ENCODE measurements at regions of chr17 and their contacts with region 1.

Region 1: DNA sequence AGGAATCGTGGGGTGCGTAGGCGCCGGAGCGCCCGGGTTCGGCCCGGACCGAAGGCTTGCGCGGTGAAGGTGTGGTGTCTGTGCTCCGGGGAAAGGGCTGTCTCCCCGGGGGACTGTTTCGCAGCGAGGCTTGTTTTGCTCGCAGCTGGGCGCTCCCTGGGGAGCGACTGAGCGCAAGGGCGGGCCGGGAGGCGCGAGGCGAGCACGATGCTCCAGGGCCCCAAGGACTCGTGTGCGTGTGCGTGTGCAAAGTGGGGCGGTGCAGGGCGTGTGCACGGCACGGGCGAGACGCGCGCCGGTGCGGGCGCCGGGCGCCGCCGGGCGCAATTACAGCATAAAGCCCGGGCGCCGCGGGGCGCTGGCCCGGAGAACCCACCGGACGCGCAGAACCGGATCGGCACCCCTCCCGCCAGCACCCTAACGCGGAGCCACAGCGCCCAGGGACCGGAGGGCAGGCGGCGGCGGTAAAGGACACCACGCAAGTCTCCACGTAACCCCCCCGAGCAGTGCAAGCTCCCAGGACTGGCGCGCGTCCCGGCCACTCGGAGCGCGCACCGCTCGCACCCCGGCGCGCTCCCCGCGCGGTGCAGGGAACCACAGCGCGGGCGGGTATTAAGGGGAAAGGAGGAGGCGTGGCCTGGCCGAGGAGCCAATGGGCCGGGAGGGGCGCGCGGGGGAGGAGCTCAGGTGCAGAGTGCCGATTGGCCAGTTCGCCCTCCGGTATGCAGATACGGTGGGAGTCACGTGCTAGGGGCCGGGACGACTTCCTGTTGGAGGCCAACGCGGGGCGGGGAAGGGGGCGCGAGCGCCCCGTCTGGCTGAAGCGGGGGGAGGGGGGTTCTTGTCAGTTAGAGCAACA is at the start of gene TNRC6C:
- DNase-seq: peak; percentile 100
- H3K4me3 ChIP-seq: peak within 1 kb of the TSS; percentile 93
- H3K4me3 Mint-ChIP-seq: peak within 1 kb of the TSS; percentile 97
- H3K27ac Mint-ChIP-seq: peak within 1 kb of the TSS; percentile 85
- H3K4me1 ChIP-seq: peaks cover 3% of the 10 kb centered on the region
- H3K4me1 Mint-ChIP-seq: peaks cover 6% of the 10 kb centered on the region
- H3K27me3 ChIP-seq: no peaks in the 10 kb centered on the region
- H3K27me3 Mint-ChIP-seq: peaks cover 31% of the 10 kb centered on the region
- CTCF ChIP-seq: peak in 1 of 2 experiments; percentile 47
- total RNA-seq, gene TNRC6C: 17.9 and 19.5 TPM in 2 replicates

Region 2: DNA sequence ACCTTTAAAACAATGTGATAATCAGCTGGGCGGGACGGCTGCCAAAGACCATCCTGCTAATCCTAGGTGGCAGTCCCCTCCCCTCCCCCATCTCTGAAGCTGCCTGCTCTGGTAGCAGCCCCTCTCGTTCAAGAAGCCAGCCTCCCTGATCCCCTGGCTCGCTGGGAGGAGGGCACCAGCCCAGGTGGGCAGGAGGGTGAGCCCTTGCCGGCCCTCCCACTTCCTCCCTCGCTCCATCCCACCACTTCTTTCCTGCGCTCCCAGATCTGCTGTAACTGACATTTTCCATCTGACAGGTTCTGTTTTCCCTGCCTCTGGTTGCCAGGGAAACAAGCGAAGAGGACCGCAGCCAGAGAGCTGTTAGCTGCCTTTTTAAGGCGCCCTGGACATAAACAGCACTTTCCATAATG is 155.3 kb before region 1 on chr17:
- CTCF ChIA-PET with region 1: no interaction called
- POLR2A ChIA-PET with region 1: no interaction called
- intact Hi-C with region 1: no loop called
- DNase-seq: peak in 1 of 2 experiments; percentile 14
- H3K4me3 ChIP-seq: no peak overlapping the region
- H3K4me3 Mint-ChIP-seq: no peak overlapping the region
- H3K27ac Mint-ChIP-seq: no peak overlapping the region
- H3K4me1 ChIP-seq: no peaks in the 10 kb centered on the region
- H3K4me1 Mint-ChIP-seq: no peaks in the 10 kb centered on the region
- H3K27me3 ChIP-seq: peaks cover 3% of the 10 kb centered on the region
- H3K27me3 Mint-ChIP-seq: peaks cover 38% of the 10 kb centered on the region
- CTCF ChIP-seq: no peak

Region 3: DNA sequence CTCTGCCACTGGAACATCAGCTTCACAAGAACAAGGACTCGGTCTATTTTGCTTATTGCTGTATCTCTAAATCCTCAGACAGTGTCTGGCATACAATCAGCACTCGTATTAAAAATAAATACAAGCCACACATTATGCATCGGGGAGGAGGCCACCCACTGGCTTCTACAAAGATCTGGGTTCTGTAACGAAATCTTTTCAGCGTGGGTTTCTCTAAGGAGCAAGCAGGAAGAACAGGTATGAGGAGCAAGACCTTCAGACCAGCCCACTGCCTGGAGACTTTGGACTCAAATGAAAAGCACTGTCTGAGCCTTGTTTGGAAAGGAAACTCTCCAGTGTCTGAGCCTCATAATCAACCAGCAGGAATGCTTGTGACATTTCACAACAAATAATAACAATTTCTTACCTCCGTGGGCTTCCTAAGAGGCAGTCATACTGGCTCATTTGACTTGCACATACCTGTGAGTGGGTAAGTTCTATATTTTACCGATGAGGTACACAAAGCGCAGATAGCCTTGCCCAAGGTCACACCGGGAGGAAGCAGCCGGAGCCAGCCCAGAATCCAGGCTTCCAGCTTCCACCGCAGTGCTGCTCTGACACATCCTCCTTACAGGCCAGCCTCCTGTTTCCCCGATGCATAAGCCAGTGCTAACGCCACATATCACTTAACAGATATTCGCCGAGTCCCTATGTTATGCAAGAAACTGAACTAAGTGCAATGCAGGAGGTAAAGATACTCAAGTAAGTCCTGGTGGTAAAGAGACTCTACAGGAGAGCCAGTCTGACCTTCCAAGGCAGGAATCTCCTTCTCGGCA is 118.2 kb before region 1 on chr17:
- CTCF ChIA-PET with region 1: interaction called, 7 read pairs
- POLR2A ChIA-PET with region 1: interaction called, 6 read pairs
- intact Hi-C with region 1: loop called (anchors 1 kb)
- DNase-seq: peak; percentile 77 to 80
- H3K4me3 ChIP-seq: no peak overlapping the region
- H3K4me3 Mint-ChIP-seq: peak overlapping the region; percentile 46
- H3K27ac Mint-ChIP-seq: peak overlapping the region; percentile 65
- H3K4me1 ChIP-seq: peaks cover 22% of the 10 kb centered on the region
- H3K4me1 Mint-ChIP-seq: peaks cover 17% of the 10 kb centered on the region
- H3K27me3 ChIP-seq: no peaks in the 10 kb centered on the region
- H3K27me3 Mint-ChIP-seq: no peaks in the 10 kb centered on the region
- CTCF ChIP-seq: no peak

Region 4: DNA sequence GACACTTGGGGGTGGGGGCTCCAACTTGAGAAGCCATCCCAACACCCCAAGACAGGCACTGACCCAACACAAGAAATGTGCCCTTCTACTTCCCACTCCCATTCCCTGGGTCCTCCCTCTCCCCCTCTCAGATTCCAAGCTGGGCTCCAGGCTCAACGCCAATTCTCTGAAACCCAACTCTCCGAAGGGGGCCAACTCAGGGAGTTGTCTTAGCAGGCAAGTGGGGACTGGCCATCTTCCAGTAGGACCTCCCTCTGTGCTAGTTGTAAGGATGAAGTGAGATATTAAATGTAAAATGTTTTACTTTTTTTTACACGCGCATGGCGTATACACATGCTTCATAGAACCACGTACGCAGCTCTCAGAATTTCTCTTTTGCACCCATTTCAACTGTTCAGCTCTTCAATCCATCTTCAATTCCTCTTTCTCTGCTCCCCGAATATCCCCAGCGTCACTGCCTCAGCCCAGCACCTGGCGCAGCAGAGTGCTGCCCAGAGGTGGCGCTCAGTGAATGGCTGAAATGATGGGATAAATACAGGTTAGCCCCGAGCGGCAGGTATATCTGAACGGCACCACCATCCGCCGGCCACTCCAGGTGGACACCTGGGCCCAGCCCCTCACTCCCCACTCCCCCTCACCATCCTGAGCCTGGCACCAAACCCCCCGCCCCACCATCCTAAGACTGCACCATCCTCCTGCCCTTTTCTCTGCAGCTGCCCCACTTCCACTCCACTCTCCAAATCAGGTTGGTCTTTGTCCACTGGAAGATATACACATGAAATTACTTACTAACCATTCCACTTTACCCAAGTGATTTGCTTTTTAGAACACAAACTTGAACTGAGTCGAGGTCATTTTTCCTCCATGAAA is 43.5 kb before region 1 on chr17:
- CTCF ChIA-PET with region 1: interaction called, 4 read pairs
- POLR2A ChIA-PET with region 1: interaction called, 12 read pairs
- intact Hi-C with region 1: no loop called
- DNase-seq: no peak
- H3K4me3 ChIP-seq: no peak overlapping the region
- H3K4me3 Mint-ChIP-seq: no peak overlapping the region
- H3K27ac Mint-ChIP-seq: no peak overlapping the region
- H3K4me1 ChIP-seq: peaks cover 6% of the 10 kb centered on the region
- H3K4me1 Mint-ChIP-seq: peaks cover 17% of the 10 kb centered on the region
- H3K27me3 ChIP-seq: peaks cover 2% of the 10 kb centered on the region; the same call in 1 of the 2 replicates
- H3K27me3 Mint-ChIP-seq: peaks cover 44% of the 10 kb centered on the region
- CTCF ChIP-seq: peak in 1 of 2 experiments; percentile 34

Region 5: DNA sequence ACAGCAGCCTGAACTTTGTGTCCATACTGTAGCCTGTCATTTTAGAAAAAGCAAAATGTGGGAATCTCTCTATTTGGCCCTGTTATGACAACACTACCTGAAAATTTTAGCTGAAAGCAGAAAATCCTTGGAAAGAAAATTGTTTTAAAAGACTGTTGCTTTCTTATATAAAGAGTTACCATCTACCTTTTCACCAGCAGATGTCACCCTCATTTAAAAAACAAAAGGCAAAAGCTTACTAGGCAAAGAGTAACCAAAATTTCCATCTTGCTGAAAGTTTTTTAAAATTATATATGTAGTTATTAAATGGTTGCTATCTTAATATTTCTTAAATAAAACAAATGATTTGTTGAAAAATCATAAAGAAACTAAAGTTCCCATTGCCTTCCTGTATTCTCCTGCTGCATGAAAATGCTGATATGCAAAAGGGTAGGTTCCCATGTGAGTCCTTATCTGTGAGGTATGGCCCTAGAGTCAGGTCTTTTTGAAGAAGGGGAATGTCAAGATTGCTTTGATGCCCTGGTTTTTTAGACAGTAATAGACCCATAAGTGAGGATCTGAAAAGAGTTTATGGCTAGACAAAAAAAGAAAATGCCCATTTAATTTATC is 61.4 kb after region 1 on chr17:
- CTCF ChIA-PET with region 1: interaction called, 9 read pairs
- POLR2A ChIA-PET with region 1: interaction called, 13 read pairs
- intact Hi-C with region 1: no loop called
- DNase-seq: no peak
- H3K4me3 ChIP-seq: no peak overlapping the region
- H3K4me3 Mint-ChIP-seq: no peak overlapping the region
- H3K27ac Mint-ChIP-seq: no peak overlapping the region
- H3K4me1 ChIP-seq: no peaks in the 10 kb centered on the region
- H3K4me1 Mint-ChIP-seq: no peaks in the 10 kb centered on the region
- H3K27me3 ChIP-seq: no peaks in the 10 kb centered on the region
- H3K27me3 Mint-ChIP-seq: no peaks in the 10 kb centered on the region
- CTCF ChIP-seq: peak; percentile 47 to 48

Measured in Caco-2 (cell line).